ENCODE measurements at regions of chr19 and their contacts with region 1.

Region 1: DNA sequence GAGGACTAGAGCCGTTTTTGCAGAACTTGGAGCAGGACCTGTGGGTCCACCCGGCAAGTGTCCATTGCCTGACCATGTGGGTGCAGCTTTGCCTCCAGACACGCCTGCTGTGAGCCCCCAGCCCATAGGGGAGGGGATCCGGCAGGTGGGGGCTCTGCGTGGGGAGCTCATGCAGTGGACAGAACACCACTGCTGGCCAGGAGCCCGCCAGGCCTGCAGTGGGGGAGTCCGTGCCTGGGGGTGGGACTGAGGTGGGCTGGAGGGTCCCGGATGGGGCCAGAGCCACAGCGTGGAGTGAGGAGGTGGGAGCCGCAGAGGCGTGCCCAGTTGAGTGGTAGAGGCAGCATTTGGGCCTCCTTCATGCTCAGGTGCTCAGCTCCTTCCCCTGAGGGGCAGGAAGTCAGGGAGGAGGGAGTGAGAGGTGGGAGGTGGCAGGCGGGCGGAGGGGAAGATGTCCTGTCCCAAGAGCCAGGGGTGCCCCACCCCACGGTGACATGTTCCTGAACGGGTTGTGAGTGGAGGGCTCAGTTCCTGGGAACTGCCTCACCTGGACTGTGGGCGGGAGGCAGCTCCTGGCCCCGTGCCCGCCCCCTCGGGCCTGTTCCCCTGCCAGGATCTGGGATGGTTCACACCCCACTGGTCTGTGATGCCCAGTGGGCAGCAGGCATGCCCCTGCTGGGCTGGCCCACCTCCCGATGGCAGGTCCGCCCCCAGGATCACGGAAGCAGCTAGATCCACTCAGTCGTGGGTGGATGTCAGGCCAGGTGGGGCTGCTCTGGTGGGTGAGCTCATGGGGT is 8.8 kb downstream of the ADAT3 start:
- DNase-seq: no peak
- H3K4me3 ChIP-seq: no peak overlapping the region
- H3K27ac ChIP-seq: no peak overlapping the region
- H3K27me3 ChIP-seq: no peaks in the 10 kb centered on the region
- CTCF ChIP-seq: no peak

Region 2: DNA sequence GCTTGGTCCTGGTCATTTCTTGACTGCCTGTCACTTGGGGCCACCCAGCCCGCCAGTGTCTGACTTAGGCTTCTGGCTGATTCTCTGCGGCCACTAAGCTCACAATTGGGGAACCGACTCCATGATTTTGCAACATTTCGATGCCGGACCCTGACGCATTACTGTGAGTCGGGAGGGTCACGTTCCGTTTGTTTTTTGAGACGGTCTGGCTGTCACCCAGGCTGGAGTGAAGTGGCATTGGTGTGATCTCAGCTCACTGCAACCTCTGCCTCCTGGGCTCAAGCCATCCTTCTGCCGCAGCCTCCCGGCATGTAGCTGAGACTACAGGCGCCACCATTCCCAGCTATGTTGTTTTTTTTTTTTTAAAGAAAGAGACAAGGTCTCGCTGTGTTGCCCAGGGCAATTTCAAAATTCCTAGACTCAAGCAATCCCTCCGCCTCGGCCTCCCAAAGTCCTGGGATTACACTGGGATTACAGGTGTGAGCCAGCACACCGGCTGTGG is 12.0 kb before region 1 on chr19:
- CTCF ChIA-PET with region 1: no interaction called
- POLR2A ChIA-PET with region 1: no interaction called
- DNase-seq: no peak
- H3K4me3 ChIP-seq: no peak overlapping the region
- H3K27ac ChIP-seq: no peak overlapping the region
- H3K27me3 ChIP-seq: no peaks in the 10 kb centered on the region
- CTCF ChIP-seq: no peak

Region 3: DNA sequence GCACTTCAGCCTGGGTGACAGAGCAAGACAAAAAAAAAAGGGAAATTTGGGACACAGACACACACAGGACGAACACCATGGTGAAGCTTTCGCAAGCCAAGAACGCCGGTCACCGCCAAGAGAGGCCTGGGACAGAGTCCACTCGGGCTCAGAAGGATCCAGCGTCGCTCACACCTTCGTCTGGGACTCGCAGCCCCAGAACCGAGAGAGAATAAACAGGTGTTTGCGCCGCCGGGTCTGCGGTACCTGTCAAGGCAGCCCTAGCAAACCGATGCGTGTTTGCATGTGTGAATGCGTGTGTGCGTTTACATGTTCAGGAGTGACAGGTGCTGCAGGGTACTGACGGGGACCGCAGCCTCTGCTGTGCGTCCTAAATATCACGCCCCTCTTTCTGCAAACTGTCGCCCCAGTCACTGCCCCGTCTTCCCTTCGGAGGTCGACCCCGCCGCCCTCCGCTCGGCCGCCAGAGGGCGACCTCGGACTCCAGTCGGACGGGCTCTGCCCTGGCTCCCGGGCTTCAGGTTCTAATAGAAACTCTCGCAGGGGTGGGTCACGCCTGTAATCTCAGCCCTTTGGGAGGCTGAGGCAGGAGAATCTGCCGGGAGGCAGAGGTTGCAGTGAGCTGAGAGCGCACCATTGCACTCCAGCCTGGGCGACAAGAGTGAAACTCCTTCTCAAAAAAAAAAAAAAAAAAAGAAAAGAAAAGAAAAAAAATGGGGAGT is 15.2 kb after region 1 on chr19:
- CTCF ChIA-PET with region 1: interaction called, 15 read pairs
- POLR2A ChIA-PET with region 1: interaction called, 4 read pairs
- DNase-seq: no peak
- H3K4me3 ChIP-seq: peak overlapping the region; percentile 54
- H3K27ac ChIP-seq: no peak overlapping the region
- H3K27me3 ChIP-seq: peaks cover 2% of the 10 kb centered on the region
- CTCF ChIP-seq: peak; percentile 89

Measured in AG04450 (cell line).